Colonic mucosa (tissue), 4 donors: ENCODE measurements at regions of chr11 and their contacts with region 1.

Region 1: GRCh38 chr11:10933455-10934292 is 75.8 kb upstream of the ZBED5 start:
- DNase-seq: peak; percentile 94
- H3K4me3 ChIP-seq: peak overlapping the region; percentile 21
- H3K27ac ChIP-seq: peak overlapping the region; percentile 82
- H3K4me1 ChIP-seq: no peaks in the 10 kb centered on the region
- H3K27me3 ChIP-seq: peaks cover 3% of the 10 kb centered on the region
- CTCF ChIP-seq: peak; percentile 97

Region 2: DNA sequence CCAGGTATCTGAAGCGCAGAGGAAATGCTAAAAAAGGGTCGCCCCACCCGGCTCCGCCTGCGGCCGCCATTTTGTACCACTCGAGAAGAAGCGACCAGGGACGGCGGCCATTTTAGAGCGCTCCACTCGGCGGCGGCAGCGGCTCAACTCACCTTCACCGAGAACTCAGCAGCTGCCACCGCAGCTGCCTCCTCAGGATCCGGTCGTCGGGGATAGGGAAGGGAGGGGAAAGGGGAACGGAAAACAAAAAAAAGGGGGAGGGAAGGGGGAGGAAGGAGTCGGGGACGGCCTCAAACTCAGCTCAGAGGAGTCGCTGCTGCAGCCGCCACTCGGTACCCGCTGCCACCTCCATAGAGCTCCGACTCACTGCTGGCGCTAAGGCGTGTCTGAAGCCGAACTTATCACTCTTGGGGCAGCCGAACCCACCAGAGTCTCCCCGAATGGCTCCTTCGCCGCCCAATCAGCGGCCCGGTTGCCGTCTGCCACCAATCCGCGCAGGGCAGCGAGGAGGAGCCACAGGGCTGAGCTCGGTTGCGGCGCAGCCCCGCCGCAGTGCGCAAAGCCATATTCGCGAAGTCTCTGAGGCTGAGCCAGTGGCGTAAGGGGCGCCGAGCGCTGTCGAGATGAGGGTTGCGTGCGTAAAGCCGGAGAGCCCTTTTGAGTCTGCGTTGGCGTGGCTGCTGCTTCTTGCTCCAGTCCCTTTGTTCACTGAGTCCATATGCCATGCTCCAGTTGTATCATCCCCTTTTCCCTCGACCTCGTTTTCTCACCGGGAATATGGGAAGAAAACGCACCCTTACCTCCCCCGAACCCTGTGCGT is 124.9 kb before region 1 on chr11 and contains the start of gene EIF4G2:
- intact Hi-C with region 1: loop called (anchors 1 kb)
- DNase-seq: peak; percentile 99
- H3K4me3 ChIP-seq: peak within 1 kb of the TSS; percentile 95
- H3K27ac ChIP-seq: peak within 1 kb of the TSS; percentile 99
- H3K4me1 ChIP-seq: peaks cover 10% of the 10 kb centered on the region
- H3K27me3 ChIP-seq: no peaks in the 10 kb centered on the region
- CTCF ChIP-seq: no peak
- total RNA-seq, gene EIF4G2: 1,073 to 1,080 TPM

Region 3: DNA sequence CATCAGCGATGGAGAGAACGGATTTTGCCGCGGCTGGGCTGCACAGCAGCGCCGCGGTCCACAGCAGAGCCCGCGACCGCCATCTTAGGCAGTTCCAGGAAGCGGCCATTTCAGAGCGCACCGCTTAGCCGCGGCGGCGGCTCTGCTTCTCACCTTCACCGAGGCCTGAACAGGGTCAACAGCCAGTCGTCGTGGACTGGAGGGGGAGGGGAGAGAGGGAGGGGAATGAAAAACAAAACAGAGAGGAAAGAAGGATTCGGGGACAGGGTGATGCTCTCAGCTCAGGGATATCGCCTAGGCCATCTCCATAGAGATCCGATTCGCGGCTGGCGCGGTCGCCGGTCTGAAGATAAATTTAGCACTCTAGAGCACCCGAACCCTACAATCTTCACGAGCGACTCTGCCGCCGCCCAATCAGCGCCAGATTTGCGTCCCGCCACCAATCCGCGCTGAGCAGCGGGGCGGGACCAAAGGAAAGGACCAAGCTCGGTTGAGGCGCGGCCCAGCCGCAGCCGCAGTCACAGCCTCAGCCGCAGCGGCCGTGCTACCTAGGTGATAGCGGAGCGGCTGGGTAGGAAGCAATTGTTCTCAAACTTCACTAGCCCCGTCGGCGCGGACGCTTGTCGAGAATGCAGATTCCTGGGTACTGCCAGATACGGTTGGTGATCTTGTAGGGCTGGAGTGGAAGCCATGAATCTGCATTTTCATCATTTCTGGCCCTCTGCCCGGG is 75.8 kb before region 1 on chr11 and contains the start of gene ZBED5:
- intact Hi-C with region 1: loop called (anchors 5 kb)
- DNase-seq: peak; percentile 98
- H3K4me3 ChIP-seq: peak within 1 kb of the TSS; percentile 73
- H3K27ac ChIP-seq: peak within 1 kb of the TSS; percentile 100
- H3K4me1 ChIP-seq: no peaks in the 10 kb centered on the region
- H3K27me3 ChIP-seq: no peaks in the 10 kb centered on the region
- CTCF ChIP-seq: no peak
- total RNA-seq, gene ZBED5: 37.1 to 38.6 TPM

Region 4: GRCh38 chr11:11022125-11022730 is 88.6 kb after region 1 on chr11:
- intact Hi-C with region 1: loop called (anchors 2 kb)
- DNase-seq: peak; percentile 26
- H3K4me3 ChIP-seq: no peak overlapping the region
- H3K27ac ChIP-seq: no peak overlapping the region
- H3K4me1 ChIP-seq: no peaks in the 10 kb centered on the region
- H3K27me3 ChIP-seq: no peaks in the 10 kb centered on the region
- CTCF ChIP-seq: peak; percentile 21

Region 5: DNA sequence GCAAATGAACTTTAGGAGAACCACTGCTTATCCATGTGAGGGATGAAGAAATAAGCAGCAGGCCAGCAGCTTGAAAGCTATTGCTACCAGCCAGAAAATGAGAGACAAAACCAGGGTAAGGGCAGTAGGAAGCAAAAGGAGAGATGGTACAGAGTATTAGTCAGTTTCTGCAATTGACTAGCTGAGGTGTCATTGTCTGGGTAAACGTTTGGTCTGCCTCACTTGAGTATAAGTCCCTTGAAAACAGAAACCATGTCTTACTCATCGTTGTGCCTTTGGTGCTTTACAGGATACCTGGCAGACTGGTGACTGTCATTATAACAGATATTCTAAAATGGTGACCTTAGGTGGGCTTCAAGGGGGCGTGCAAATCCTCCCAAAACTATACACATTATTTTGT is 844.2 kb after region 1 on chr11:
- intact Hi-C with region 1: loop called (anchors 10 kb)
- DNase-seq: no peak
- H3K4me3 ChIP-seq: no peak overlapping the region
- H3K27ac ChIP-seq: no peak overlapping the region
- H3K4me1 ChIP-seq: no peaks in the 10 kb centered on the region
- H3K27me3 ChIP-seq: no peaks in the 10 kb centered on the region
- CTCF ChIP-seq: no peak